Endothelial cell of umbilical vein (primary cell): ENCODE measurements at regions of chr6 and their contacts with region 1.

Region 1: GRCh38 chr6:137927777-137928218 is 60.7 kb downstream of the TNFAIP3 start:
- DNase-seq: peak; percentile 52
- H3K4me3 ChIP-seq: no peak overlapping the region
- H3K27ac ChIP-seq: no peak overlapping the region
- H3K4me1 ChIP-seq: peaks cover 6% of the 10 kb centered on the region
- H3K27me3 ChIP-seq: no peaks in the 10 kb centered on the region
- CTCF ChIP-seq: no peak
- POLR2A ChIP-seq: no peak

Region 2: GRCh38 chr6:137938770-137939379 is 11.1 kb after region 1 on chr6:
- CTCF ChIA-PET with region 1: interaction called, 10 read pairs
- POLR2A ChIA-PET with region 1: no interaction called
- dilution Hi-C with region 1: no loop called
- intact Hi-C with region 1: no loop called
- DNase-seq: no peak
- H3K4me3 ChIP-seq: no peak overlapping the region
- H3K27ac ChIP-seq: no peak overlapping the region
- H3K4me1 ChIP-seq: no peaks in the 10 kb centered on the region
- H3K27me3 ChIP-seq: no peaks in the 10 kb centered on the region
- CTCF ChIP-seq: no peak
- POLR2A ChIP-seq: no peak